ENCODE measurements at regions of chr6 and their contacts with region 1.

Region 1: DNA sequence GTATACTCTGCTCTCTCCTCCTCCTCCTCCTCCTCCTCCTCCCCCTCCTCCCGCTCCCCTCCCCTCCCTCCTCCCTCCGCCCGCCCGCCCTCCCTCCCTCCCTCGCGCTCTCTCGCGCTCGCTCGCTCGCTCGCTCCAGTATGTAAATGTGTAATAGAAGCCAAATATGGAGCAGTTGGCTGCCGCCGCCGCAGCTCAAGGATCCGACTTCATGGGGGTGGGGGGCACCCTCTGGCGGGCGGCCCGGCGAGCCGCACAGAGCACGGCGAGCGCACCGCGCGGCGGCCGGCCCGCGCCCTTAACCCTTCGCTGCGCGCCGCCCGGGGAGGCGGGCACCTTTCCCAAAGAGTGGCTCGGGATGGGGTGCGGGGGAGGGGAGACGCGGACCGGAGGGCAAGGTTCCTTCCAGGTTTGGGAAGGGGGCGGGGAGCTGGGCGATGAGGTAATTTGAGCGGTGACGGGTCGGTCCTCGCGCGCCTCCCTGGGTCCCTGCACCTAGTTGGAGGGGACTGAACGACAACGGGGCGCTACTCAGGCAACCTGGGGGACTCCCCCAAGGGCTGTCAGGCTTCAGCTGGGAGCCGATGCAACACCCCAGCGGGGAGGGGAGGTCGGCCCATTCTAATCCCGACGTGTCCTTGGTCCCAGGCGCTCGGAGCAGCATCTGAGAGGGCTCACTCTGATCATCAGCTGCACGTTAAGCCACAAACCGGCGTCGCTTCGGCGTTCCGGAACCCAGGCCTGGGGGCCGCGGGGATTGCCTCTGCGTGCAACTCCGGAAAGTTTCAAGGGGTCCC is 409 bp upstream of the ATXN1 start:
- DNase-seq: peak; percentile 66 to 91 (median 83)
- ATAC-seq: peak; percentile 64 to 74 (median 70)
- H3K4me3 ChIP-seq: peak overlapping the region; percentile 78 to 92
- H3K4me3 Mint-ChIP-seq: peak overlapping the region; percentile 97 to 99 (median 97)
- H3K27ac ChIP-seq: peak overlapping the region; percentile 99
- H3K27ac Mint-ChIP-seq: peak overlapping the region; percentile 97 to 98
- H3K4me1 ChIP-seq: peaks cover 8 to 19% of the 10 kb centered on the region in 2 experiments
- H3K4me1 Mint-ChIP-seq: peaks cover 47 to 63% (median 61%) of the 10 kb centered on the region in 3 donors
- H3K27me3 ChIP-seq: no peaks in the 10 kb centered on the region
- H3K27me3 Mint-ChIP-seq: no peaks in the 10 kb centered on the region

Region 2: DNA sequence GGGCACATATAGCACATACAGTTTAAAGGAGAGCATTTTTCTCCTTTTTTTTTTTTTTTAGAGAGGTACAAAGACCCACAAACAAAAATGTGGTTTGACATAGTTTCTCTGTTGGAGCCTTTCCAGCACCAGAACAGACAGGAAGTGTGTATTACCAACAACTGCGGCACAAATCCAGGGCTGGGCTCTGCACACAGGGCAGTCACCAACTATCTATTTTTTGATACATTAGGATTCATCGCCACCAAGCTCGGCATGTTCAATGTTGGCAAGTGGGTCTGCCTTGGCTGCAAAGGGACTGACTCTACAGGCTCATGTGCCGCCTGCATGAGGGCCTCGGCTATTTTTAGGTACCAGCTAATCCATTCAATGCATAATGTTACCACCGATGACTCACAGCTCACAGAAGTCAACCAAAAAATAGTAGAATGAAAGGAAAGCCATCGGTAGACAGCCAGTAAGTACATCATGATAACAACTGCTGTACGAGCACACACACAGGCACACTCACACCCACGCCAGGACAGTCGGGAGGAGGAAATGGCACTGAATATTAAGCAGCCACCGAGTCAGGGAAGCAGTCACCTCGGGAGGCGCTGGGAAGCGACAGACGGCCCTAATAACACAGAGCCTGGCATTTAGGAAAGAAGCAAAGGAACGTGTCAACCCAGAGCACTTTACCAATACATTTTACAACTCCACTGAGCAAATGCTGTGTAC is 441.7 kb before region 1 on chr6:
- CTCF ChIA-PET with region 1: interaction called in 1 of 2 experiments, 8 read pairs
- POLR2A ChIA-PET with region 1: interaction called in 1 of 2 experiments, 21 read pairs
- DNase-seq: peak; percentile 40 to 83 (median 61)
- ATAC-seq: peak; percentile 66 to 79 (median 78)
- H3K4me3 ChIP-seq: peak overlapping the region; percentile 32 to 38
- H3K4me3 Mint-ChIP-seq: peak overlapping the region; percentile 52 to 79 (median 70)
- H3K27ac ChIP-seq: peak overlapping the region; percentile 95
- H3K27ac Mint-ChIP-seq: peak overlapping the region; percentile 83 to 93
- H3K4me1 ChIP-seq: peaks cover 35 to 75% of the 10 kb centered on the region in 2 experiments
- H3K4me1 Mint-ChIP-seq: peaks cover 69 to 82% (median 77%) of the 10 kb centered on the region in 3 donors
- H3K27me3 ChIP-seq: no peaks in the 10 kb centered on the region
- H3K27me3 Mint-ChIP-seq: no peaks in the 10 kb centered on the region

Region 3: GRCh38 chr6:16595514-16596120 is 166.1 kb before region 1 on chr6:
- CTCF ChIA-PET with region 1: interaction called in 1 of 2 experiments, 3 read pairs
- POLR2A ChIA-PET with region 1: interaction called in 1 of 2 experiments, 12 read pairs
- DNase-seq: no peak
- ATAC-seq: no peak
- H3K4me3 ChIP-seq: no peak overlapping the region
- H3K4me3 Mint-ChIP-seq: no peak overlapping the region
- H3K27ac ChIP-seq: no peak overlapping the region
- H3K27ac Mint-ChIP-seq: no peak overlapping the region
- H3K4me1 ChIP-seq: peaks cover 3 to 5% of the 10 kb centered on the region in 2 experiments
- H3K4me1 Mint-ChIP-seq: peaks cover 5 to 31% (median 21%) of the 10 kb centered on the region in 3 donors
- H3K27me3 ChIP-seq: no peaks in the 10 kb centered on the region
- H3K27me3 Mint-ChIP-seq: no peaks in the 10 kb centered on the region

Region 4: DNA sequence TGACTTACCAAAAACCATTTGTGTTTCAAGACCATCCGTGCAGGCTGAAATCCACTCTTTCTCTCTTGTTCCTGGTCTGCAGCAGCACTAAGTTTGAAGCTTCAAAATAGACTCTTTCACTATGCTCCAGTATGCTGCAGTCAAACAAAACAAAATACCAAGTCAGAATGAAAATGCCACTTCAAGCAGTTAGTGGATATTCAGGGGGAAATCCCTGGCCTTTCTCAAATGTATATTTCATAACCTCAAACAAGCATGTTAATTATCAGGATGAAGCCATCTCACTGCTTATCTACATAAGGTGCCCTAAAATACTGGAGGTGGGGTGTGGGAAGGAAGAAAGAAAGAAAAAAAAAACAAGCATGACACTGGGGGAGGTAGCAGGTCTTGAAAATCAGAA is 103.9 kb before region 1 on chr6:
- CTCF ChIA-PET with region 1: interaction called in 1 of 2 experiments, 5 read pairs
- POLR2A ChIA-PET with region 1: interaction called, 6 to 16 read pairs
- DNase-seq: peak in 1 of 35 experiments; percentile 45
- ATAC-seq: peak in 2 of 4 experiments; percentile 20 to 40
- H3K4me3 ChIP-seq: no peak overlapping the region
- H3K4me3 Mint-ChIP-seq: peak overlapping the region; percentile 38 to 48 (median 44)
- H3K27ac ChIP-seq: peak overlapping the region; percentile 71
- H3K27ac Mint-ChIP-seq: peak overlapping the region; percentile 88 to 97
- H3K4me1 ChIP-seq: peaks cover 10 to 42% of the 10 kb centered on the region in 2 experiments
- H3K4me1 Mint-ChIP-seq: peaks cover 59 to 70% (median 61%) of the 10 kb centered on the region in 3 donors
- H3K27me3 ChIP-seq: no peaks in the 10 kb centered on the region
- H3K27me3 Mint-ChIP-seq: no peaks in the 10 kb centered on the region

Region 5: GRCh38 chr6:16712931-16713484 is 48.7 kb before region 1 on chr6:
- CTCF ChIA-PET with region 1: interaction called, 3 to 9 read pairs
- POLR2A ChIA-PET with region 1: interaction called in 1 of 2 experiments, 10 read pairs
- DNase-seq: peak in 1 of 35 experiments; percentile 52
- ATAC-seq: peak; percentile 16 to 36 (median 29)
- H3K4me3 ChIP-seq: peak overlapping the region in 1 of 2 donors; percentile 30
- H3K4me3 Mint-ChIP-seq: peak overlapping the region; percentile 64 to 71 (median 68)
- H3K27ac ChIP-seq: peak overlapping the region; percentile 84
- H3K27ac Mint-ChIP-seq: peak overlapping the region; percentile 86 to 92
- H3K4me1 ChIP-seq: peaks cover 0 to 27% of the 10 kb centered on the region in 2 experiments
- H3K4me1 Mint-ChIP-seq: peaks cover 29 to 47% (median 36%) of the 10 kb centered on the region in 3 donors
- H3K27me3 ChIP-seq: no peaks in the 10 kb centered on the region
- H3K27me3 Mint-ChIP-seq: no peaks in the 10 kb centered on the region

Region 6: DNA sequence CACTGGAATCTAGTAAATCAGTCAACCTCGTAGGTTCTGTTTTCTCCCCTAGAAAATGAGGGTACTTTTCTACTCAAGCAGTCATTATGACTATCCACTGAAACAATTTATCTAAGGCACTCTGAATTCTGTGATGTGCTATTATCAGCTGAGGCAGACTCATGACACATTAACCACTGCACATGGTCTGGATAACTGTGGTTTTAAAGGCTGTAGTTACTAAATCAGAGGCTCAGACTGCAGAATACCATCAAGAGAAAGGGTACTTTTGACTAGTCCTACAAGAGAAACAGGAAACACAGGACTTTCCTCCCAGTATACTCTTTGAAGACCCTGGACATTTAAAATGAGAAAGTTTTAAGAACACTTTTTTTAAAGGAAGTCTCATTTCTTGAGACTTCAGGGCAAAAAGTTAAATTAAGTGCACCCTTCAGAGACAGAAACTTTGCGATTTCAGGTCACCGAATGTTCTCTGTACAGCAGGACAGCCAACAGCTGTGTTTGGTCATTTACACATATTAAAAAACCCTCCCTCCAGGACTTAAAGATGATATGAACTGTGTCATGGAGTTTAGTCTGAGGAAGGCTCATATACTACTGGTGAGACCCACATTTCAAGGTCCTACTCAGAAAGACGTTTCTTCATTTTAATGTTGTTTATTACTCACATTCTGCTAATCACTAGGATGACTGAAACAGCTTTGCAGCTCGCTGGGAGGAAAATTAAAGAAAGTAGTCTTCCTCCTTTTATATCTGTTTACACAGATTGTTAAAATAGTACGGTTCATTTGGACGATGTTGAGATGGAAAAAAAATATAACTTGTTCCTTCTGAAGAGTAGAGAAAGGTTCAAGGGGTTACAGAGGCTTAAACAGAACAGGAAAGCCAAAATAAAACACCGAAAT is 20.3 kb before region 1 on chr6:
- CTCF ChIA-PET with region 1: interaction called, 3 to 21 read pairs
- POLR2A ChIA-PET with region 1: interaction called, 10 to 19 read pairs
- DNase-seq: peak in 1 of 35 experiments; percentile 38
- ATAC-seq: peak in 3 of 4 experiments; percentile 27 to 53 (median 52)
- H3K4me3 ChIP-seq: no peak overlapping the region
- H3K4me3 Mint-ChIP-seq: no peak overlapping the region
- H3K27ac ChIP-seq: peak overlapping the region; percentile 3
- H3K27ac Mint-ChIP-seq: peak overlapping the region; percentile 5 to 53
- H3K4me1 ChIP-seq: peaks cover 0 to 12% of the 10 kb centered on the region in 2 experiments
- H3K4me1 Mint-ChIP-seq: peaks cover 34 to 82% (median 74%) of the 10 kb centered on the region in 3 donors
- H3K27me3 ChIP-seq: no peaks in the 10 kb centered on the region
- H3K27me3 Mint-ChIP-seq: no peaks in the 10 kb centered on the region

Region 7: DNA sequence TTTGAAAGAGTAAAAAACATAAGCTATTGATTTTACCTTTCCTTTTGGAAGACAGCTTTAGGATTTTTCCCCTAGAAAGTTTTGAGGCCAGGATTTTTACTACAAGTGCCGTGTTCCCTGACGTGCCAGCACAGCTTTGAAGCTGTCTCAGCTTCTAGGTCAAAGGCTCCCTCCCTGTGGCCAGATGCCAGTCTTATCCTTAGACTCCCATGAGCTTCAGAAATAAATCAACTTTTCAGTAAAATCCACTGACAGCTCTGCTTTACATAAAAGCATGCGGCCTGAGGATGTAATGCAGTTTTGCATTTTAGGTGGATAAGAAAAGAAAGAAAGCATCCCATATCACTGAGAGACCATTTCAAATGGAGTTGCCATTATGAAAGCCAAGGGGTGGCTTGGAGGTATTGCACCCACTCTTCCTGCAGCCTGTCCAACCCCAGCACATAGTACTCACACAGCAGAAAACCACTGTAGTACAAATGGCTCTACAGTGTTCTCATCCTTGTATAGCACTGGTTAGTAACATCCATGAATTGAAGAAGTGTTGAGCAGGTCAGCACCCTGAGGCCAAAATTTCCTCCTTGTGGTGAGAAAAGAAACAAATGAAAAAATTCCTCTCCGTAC is 14.8 kb after region 1 on chr6:
- CTCF ChIA-PET with region 1: interaction called, 4 to 21 read pairs
- POLR2A ChIA-PET with region 1: interaction called in 1 of 2 experiments, 7 read pairs
- DNase-seq: no peak
- ATAC-seq: no peak
- H3K4me3 ChIP-seq: no peak overlapping the region
- H3K4me3 Mint-ChIP-seq: no peak overlapping the region
- H3K27ac ChIP-seq: no peak overlapping the region
- H3K27ac Mint-ChIP-seq: no peak overlapping the region
- H3K4me1 ChIP-seq: peaks cover 0 to under 1% of the 10 kb centered on the region in 2 experiments
- H3K4me1 Mint-ChIP-seq: peaks cover 3 to 14% (median 8%) of the 10 kb centered on the region in 3 donors
- H3K27me3 ChIP-seq: no peaks in the 10 kb centered on the region
- H3K27me3 Mint-ChIP-seq: peaks cover 3 to 4% of the 10 kb centered on the region in 2 donors

Region 8: DNA sequence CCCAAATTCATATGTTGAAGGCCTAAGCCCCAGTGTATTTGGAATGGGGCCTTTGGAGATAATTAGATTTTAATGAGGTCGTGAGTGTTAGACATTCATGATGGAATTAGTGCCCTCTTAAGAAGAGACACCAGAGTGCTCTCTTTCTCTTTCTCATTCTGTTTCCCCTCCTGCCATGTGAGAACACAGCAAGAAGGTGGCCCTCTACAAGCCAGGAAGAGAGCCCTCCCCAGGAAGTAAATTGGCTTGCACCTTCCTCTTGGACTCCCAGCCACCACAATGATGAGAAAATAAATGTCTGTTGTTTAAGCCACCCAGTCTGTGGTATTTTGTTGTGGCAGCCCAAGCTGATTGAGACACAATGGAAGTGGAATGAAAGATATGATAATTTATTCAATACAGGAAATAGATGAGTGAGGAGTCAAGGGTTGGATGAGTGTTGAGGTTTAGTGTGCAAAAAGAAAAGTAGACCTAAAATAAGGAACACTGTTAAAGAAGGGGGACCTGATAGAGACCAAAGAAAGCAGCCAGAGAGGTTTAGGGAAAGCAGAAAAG is 25.5 kb after region 1 on chr6:
- CTCF ChIA-PET with region 1: no interaction called
- POLR2A ChIA-PET with region 1: no interaction called
- DNase-seq: no peak
- ATAC-seq: no peak
- H3K4me3 ChIP-seq: no peak overlapping the region
- H3K4me3 Mint-ChIP-seq: no peak overlapping the region
- H3K27ac ChIP-seq: no peak overlapping the region
- H3K27ac Mint-ChIP-seq: no peak overlapping the region
- H3K4me1 ChIP-seq: no peaks in the 10 kb centered on the region
- H3K4me1 Mint-ChIP-seq: peaks cover 0 to 4% (median 0%) of the 10 kb centered on the region in 3 donors
- H3K27me3 ChIP-seq: no peaks in the 10 kb centered on the region
- H3K27me3 Mint-ChIP-seq: peaks cover 0 to 2% of the 10 kb centered on the region in 2 donors

Region 9: GRCh38 chr6:16844183-16844582 is 82.5 kb after region 1 on chr6:
- CTCF ChIA-PET with region 1: no interaction called
- POLR2A ChIA-PET with region 1: no interaction called
- DNase-seq: no peak
- ATAC-seq: no peak
- H3K4me3 ChIP-seq: no peak overlapping the region
- H3K4me3 Mint-ChIP-seq: no peak overlapping the region
- H3K27ac ChIP-seq: no peak overlapping the region
- H3K27ac Mint-ChIP-seq: no peak overlapping the region
- H3K4me1 ChIP-seq: no peaks in the 10 kb centered on the region
- H3K4me1 Mint-ChIP-seq: peaks cover 10 to 12% (median 11%) of the 10 kb centered on the region in 3 donors
- H3K27me3 ChIP-seq: no peaks in the 10 kb centered on the region
- H3K27me3 Mint-ChIP-seq: peaks cover 7 to 14% of the 10 kb centered on the region in 2 donors